ENCODE measurements at regions of chr1 and their contacts with region 1.

Region 1: DNA sequence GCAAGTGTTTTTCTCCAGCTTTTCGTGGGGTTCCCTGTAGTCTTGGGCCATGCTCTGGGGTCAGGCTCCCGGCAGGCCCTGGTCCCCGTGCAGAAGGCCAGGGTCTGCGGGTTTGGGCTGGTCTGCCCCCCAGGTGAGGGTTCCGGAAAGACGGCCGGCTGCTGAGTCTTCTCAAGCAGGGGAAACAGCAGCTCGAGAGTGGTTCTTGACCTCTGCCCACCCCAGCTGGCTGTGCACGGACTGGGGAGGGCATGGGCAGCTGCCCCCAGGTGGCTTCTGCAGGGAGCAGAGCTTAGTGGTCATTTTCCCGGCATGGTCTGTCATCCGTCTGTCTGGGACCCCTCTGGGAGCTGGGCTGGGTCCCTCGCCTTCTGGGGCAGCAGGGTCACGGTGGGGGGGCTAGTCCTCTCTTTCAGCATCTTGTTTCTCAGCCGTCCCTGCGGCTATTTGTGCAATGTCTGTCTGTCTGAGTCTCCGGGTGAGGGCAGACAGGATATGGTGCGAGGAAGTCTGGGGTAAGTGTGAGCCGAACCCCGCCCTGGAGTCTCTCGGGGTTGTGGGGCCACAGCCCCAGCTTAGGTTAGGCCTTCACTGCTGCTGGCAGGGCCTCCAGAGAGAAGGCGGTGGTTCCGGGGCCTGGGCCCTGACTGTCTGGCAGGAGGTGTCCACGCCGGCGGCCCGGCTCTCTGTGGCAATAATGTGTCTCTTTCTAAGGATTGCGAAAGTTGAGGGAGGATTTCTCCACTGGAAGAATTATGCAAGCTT is 6.1 kb downstream of the SKI start:
- DNase-seq: peak; percentile 89
- H3K4me3 ChIP-seq: peak overlapping the region; percentile 78
- H3K27ac ChIP-seq: peak overlapping the region; percentile 89
- H3K4me1 ChIP-seq: peaks cover 100% of the 10 kb centered on the region
- H3K27me3 ChIP-seq: no peaks in the 10 kb centered on the region
- CTCF ChIP-seq: no peak

Region 2: DNA sequence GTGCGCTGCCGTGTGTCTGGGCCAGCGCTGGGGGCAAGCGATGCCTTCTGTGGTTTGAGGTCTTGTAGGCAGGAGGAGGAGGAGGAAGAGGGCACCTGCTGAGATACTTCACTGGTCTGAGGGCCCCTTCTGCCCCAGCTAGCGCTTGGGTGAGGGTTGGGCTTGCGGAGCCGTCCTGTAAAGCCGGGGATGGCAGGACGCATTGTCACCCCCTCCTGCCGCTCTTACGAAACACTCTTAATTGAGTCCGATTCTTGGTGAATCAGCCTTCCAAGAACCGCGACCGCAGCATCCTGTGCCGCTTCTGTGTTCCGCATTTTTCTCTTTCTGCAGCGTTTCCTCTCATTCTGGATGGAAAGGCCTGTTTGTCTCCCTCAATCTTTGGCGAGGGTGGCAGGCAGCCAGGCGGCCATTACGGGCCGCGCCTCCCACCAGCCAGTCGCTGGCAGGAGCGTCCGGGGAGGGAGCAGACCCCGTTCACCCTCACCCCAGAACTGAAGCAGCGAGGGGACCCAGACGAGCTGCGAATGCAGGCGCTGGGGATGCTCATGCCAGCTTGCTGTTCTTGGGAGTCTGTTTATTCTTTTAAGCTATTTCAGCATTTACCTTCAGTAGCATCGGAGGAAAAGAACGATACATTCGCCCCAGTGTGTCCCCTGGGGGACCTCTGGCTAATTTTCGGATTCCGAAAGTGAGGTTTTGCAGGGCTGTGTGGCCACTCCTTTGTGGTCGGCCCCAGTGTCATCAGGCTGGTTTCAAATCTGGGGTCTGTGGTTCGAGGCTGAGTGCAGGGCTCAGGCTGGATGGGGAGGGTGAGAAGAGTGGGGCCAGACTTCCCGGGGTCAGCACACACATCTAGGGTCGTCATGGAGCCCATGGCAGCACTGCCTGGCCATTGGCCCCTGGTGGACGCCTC is 56.7 kb after region 1 on chr1:
- intact Hi-C with region 1: loop called (anchors 10 kb)
- DNase-seq: peak; percentile 85
- H3K4me3 ChIP-seq: peak overlapping the region; percentile 50
- H3K27ac ChIP-seq: peak overlapping the region; percentile 82
- H3K4me1 ChIP-seq: peaks cover 98% of the 10 kb centered on the region
- H3K27me3 ChIP-seq: no peaks in the 10 kb centered on the region
- CTCF ChIP-seq: no peak

Region 3: DNA sequence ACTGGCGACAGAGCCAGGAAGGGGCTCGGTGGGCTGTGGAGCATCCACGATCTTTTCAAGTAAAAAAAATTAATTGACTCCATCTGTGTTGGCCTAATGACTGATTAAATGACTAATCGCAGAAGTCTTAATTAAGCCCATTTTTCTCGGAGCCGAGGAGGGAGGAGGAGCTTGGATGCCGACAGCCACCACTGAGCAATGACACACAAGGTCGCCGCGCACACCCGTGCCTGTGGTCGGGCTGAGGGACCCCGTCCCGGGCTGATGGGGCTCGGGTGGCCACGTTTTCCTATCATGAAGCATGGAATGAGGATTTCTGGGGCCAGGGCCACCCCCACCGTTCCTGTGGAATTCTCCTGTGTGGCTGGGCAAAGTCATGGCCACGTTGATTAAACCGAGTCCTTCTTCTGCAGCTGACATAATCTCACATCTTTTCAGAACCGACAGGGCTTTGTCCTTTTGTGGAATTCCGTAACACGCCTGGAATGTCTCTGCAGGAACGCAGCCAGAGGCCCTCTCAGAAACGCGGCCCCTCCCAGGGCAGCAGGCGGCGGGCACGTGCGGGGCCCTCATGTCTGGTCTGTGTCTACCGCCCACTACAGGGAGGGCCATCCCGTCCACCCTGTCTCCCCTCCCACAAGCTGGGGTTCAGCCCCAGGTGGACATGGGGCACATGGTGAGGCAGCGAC is 96.5 kb after region 1 on chr1:
- intact Hi-C with region 1: no loop called
- DNase-seq: no peak
- H3K4me3 ChIP-seq: no peak overlapping the region
- H3K27ac ChIP-seq: peak overlapping the region; percentile 24
- H3K4me1 ChIP-seq: peaks cover 13% of the 10 kb centered on the region
- H3K27me3 ChIP-seq: no peaks in the 10 kb centered on the region
- CTCF ChIP-seq: no peak

Region 4: GRCh38 chr1:2416399-2416798 is 182.2 kb after region 1 on chr1:
- intact Hi-C with region 1: no loop called
- DNase-seq: no peak
- H3K4me3 ChIP-seq: no peak overlapping the region
- H3K27ac ChIP-seq: no peak overlapping the region
- H3K4me1 ChIP-seq: peaks cover 30% of the 10 kb centered on the region
- H3K27me3 ChIP-seq: peaks cover 64% of the 10 kb centered on the region
- CTCF ChIP-seq: no peak